GM10248 (cell line): ENCODE measurements at regions of chr10 and their contacts with region 1.

Region 1: GRCh38 chr10:48322017-48322416 is 15.5 kb downstream of the MAPK8 start:
- DNase-seq: no peak
- CTCF ChIP-seq: no peak

Region 2: DNA sequence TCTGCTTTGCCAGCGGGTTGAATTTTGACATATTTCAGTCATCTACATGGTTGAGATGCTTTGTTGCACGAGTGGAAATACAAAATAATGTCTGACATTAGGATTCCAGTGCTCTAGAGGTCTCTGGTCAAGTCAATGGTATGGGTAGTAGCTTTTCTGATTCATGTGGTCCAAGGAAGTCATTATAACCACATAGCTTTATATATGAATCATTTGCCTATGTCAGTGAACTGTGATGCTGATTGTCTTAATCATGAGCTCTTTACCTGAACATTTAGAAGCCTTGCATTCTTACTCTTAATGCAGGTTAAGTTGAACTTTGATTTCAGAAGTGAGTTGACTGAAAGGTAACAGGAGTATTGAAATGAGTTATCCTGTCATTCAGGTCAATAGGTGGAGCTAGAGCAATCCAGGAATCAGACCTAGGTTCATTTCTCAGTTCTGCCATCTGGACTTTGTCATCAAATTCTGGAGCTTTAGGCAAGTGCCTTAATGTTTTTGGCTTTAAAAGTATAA is 12.2 kb before region 1 on chr10:
- CTCF ChIA-PET with region 1: interaction called, 15 read pairs
- POLR2A ChIA-PET with region 1: no interaction called
- DNase-seq: peak; percentile 33
- CTCF ChIP-seq: peak; percentile 45

Region 3: DNA sequence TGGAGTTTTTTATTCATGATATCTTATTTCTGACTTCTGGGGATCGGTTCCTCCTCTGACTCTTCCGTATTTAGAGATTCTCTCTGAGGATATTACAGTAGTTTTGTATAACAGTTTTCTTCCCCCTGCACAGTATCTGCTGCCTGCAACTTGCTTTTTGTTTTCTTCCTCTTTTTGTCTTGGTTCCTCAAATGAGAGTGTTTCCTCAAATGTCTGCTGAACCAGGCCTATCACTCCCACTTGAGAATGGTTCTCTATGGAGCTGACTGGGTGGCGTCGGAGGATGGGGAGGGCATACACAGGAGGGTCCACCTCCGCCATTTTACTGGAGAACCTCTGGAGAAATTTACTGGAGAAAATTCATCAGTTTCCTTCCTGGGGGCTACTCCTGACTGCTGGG is 255.1 kb after region 1 on chr10:
- CTCF ChIA-PET with region 1: no interaction called
- POLR2A ChIA-PET with region 1: no interaction called
- DNase-seq: peak; percentile 51
- CTCF ChIP-seq: no peak